HepG2 (cell line): ENCODE measurements at regions of chr10 and their contacts with region 1.

Region 1: DNA sequence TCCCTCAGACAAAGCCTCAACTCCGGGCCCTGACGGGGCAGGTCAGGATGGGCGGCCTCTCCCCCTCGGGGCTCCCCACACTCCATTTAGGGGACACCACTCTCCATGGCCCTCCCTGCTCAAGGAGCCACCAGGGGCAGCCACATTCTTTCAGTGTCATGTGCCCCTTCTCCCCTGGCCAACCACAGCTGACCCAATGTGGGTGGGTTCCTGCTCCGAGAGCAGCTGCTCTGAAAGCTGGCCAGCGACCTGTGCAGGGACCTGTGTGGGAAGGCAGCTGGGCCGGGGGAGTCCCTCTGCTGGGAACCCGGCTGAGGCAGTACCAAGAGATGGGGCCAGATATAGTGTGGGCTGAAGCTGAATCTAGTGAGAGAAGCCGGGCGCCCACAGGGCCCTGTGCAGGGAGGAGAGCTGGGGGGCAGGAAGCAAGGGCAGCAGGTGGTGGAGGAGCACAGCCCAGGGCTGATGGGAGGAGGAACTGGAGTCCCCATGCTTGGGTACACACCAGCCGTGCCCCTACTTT is 40.6 kb upstream of the NPFFR1 start:
- DNase-seq: peak; percentile 46
- ATAC-seq: peak; percentile 72
- H3K4me3 ChIP-seq: peak overlapping the region; percentile 70 to 92 (median 71)
- H3K27ac ChIP-seq: peak overlapping the region; percentile 77
- H3K4me1 ChIP-seq: peaks cover 62% of the 10 kb centered on the region
- H3K27me3 ChIP-seq: no peaks in the 10 kb centered on the region; a peak in 1 of 5 replicates
- CTCF ChIP-seq: no peak
- EP300 ChIP-seq: no peak
- POLR2A ChIP-seq: no peak; a peak in 1 of 4 replicates
- RAD21 ChIP-seq: no peak

Region 2: GRCh38 chr10:70192315-70192968 is 132.0 kb before region 1 on chr10:
- CTCF ChIA-PET with region 1: no interaction called
- POLR2A ChIA-PET with region 1: no interaction called
- in situ Hi-C with region 1: no loop called
- intact Hi-C with region 1: no loop called
- DNase-seq: peak; percentile 17
- ATAC-seq: no peak; the same call in 2 of the 3 replicates
- H3K4me3 ChIP-seq: no peak overlapping the region
- H3K27ac ChIP-seq: no peak overlapping the region
- H3K4me1 ChIP-seq: peaks cover 27% of the 10 kb centered on the region
- H3K27me3 ChIP-seq: no peaks in the 10 kb centered on the region
- CTCF ChIP-seq: no peak
- EP300 ChIP-seq: no peak
- POLR2A ChIP-seq: no peak
- RAD21 ChIP-seq: no peak

Region 3: GRCh38 chr10:70233109-70233938 is 91.1 kb before region 1 on chr10 and contains the start of gene PPA1:
- CTCF ChIA-PET with region 1: no interaction called
- POLR2A ChIA-PET with region 1: interaction called, 22 read pairs
- in situ Hi-C with region 1: no loop called
- intact Hi-C with region 1: no loop called
- DNase-seq: peak; percentile 92
- ATAC-seq: peak; percentile 89
- H3K4me3 ChIP-seq: peak within 1 kb of the TSS; percentile 82 to 93 (median 86)
- H3K27ac ChIP-seq: peak within 1 kb of the TSS; percentile 92
- H3K4me1 ChIP-seq: peaks cover 68% of the 10 kb centered on the region
- H3K27me3 ChIP-seq: no peaks in the 10 kb centered on the region; a peak in 1 of 5 replicates
- CTCF ChIP-seq: peak; percentile 38; the same call in 1 of the 2 replicates
- EP300 ChIP-seq: peak in 1 of 2 experiments; percentile 42; a peak in 1 of 4 replicates
- POLR2A ChIP-seq: peak; percentile 89 to 97
- RAD21 ChIP-seq: peak; percentile 40; the same call in 1 of the 2 replicates
- total RNA-seq, gene PPA1: 250 and 371 TPM in 2 replicates

Region 4: GRCh38 chr10:70374775-70375614 is 50.6 kb after region 1 on chr10:
- CTCF ChIA-PET with region 1: no interaction called
- POLR2A ChIA-PET with region 1: no interaction called
- in situ Hi-C with region 1: no loop called
- intact Hi-C with region 1: no loop called
- DNase-seq: no peak
- ATAC-seq: peak; percentile 19; the same call in 2 of the 3 replicates
- H3K4me3 ChIP-seq: no peak overlapping the region
- H3K27ac ChIP-seq: no peak overlapping the region
- H3K4me1 ChIP-seq: peaks cover 43% of the 10 kb centered on the region
- H3K27me3 ChIP-seq: no peaks in the 10 kb centered on the region
- CTCF ChIP-seq: no peak
- EP300 ChIP-seq: no peak
- POLR2A ChIP-seq: no peak
- RAD21 ChIP-seq: no peak